ENCODE measurements at regions of chr2 and their contacts with region 1.

Region 1: GRCh38 chr2:68832233-68832869 is 38.8 kb downstream of the BMP10 start:
- DNase-seq: peak; percentile 58 to 92
- H3K4me3 ChIP-seq: no peak overlapping the region
- CTCF ChIP-seq: no peak
- POLR2A ChIP-seq: no peak

Region 2: DNA sequence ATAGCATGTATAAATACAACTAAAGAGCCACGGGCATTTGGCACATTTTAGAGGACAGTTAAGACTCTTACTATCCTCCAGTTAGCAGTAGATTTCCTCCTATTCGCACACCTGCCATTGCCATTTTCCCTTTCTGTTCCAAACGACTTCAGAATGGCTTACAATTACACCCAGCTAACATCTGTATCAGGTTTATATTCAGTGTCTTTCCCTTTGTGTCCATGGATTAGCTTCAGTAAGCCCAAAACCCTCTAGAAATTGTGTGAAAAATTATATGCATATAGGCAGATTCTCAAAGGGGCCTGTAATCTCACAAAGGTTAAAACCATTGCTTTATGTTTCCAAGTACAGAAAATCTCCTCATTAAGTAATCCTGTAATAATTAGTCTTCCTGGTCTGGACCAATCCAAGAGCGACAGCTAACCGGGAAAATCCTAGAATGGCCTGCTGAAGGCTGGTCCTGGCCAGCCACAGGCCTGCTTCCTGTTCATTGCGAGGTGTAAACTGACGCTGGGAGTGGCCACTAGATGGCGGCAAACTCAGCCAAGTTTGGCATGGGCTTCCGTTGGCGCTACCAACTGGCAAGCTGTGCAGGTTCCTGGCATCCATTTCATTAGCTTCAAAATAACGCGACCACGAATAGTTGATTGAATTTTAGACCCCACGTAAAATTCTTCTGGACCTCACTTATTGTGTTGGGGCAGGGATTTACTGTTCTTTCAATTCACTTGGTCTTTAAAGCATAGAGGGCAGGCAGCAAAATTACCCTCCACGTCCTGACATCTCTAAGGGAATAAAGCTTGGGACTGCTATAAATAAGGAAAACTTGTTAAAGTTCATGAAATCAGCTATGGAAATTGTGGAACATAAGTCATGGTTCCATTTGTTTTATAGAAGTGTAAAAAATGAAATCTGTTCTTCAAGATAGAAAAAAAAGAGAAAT is 80.7 kb before region 1 on chr2:
- intact Hi-C with region 1: loop called (anchors 10 kb)
- DNase-seq: peak; percentile 86 to 98
- H3K4me3 ChIP-seq: no peak overlapping the region
- CTCF ChIP-seq: peak in 2 of 3 donors; percentile 5 to 69
- POLR2A ChIP-seq: no peak

Region 3: DNA sequence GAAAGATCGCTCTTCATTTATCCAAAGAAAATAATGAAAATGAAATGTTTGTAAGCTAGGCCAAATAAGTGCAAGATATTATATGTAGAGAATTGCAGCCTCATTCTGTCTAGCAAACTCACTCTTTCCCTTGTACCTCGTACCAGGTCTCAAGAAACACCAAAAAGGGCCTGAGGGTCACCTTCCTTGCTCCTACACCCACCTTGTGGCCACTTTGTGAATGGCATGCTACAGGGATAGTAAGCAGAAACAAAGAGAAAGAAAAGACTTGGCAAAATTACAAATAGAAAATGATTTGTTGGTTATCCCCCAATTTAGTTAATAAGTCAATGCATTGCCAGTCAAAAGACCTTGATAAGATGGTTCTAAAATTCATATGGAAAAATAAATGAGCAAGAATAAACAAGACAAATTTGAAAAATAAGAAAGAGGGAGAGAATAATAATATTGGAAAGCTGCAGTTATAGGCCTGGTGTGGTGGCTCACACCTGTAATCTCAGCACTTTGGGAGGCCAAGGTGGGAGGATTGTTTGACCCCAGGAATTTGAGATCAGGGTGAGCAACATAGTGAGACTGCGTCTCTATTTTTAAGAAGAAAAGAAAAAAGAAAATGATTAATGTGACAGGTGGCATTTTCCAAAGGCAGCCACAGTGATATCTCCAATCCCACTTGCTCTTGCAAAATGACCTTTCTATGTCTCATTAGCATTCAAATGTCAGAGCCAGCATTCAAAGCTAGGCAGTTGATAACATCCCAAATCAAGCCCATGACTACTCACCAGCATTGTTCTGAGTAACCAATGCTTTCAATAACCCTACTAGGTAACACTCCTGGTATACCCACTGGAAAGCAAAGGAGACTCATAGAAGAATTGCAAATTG is 77.7 kb after region 1 on chr2:
- intact Hi-C with region 1: loop called (anchors 10 kb)
- DNase-seq: peak in 1 of 2 donors; percentile 66
- H3K4me3 ChIP-seq: no peak overlapping the region
- CTCF ChIP-seq: peak in 2 of 3 donors; percentile 62 to 75
- POLR2A ChIP-seq: no peak